AG04449 (cell line): ENCODE measurements at regions of chr10 and their contacts with region 1.

Region 1: GRCh38 chr10:32190890-32191491 is 134.8 kb upstream of the KIF5B start:
- DNase-seq: no peak
- H3K4me3 ChIP-seq: no peak overlapping the region
- CTCF ChIP-seq: peak; percentile 45

Region 2: DNA sequence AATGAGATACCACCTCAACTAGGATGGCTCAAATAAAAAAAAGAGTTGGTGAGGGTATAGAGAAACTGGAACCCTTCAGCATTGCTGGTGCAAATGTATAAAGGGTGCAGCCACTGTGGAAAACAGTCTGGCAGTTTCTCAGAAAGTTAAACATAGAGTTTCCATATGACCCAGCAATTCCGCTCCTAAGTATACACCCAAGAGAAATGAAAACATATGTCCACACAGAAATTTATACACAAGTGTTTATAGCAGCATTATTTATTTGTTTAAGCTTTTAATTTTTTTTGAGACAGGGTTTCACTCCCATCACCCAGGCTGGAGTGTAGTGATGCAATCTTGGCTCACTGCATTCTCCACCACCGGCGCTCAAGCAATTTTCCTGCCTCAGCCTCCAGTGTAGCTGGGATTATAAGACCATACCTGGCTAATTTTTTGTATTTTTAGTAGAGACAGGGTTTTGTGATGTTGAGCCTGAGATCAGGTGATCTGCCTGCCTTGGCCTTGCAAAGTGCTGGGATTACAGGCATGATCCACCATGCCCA is 16.6 kb before region 1 on chr10:
- CTCF ChIA-PET with region 1: interaction called, 20 read pairs
- POLR2A ChIA-PET with region 1: no interaction called
- DNase-seq: no peak
- H3K4me3 ChIP-seq: no peak overlapping the region
- CTCF ChIP-seq: no peak

Region 3: DNA sequence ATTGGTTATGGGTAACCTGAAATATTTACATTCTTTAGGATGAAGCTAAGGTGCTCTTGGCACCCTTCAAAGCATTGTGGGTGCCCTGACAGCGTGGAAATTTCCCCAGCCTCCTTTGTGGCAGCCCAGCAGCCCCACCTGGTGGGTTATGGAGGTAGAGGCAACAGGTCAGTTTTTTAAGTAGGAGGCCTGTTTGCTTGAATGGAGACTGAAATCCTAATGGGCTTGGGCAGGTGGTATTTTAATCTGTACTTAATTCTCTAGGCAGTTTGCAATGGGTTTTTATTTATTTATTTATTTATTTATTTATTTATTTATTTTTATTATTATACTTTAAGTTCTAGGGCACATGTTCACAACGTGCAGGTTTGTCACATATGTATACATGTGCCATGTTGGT is 16.6 kb after region 1 on chr10:
- CTCF ChIA-PET with region 1: interaction called, 39 read pairs
- POLR2A ChIA-PET with region 1: no interaction called
- DNase-seq: no peak
- H3K4me3 ChIP-seq: no peak overlapping the region
- CTCF ChIP-seq: peak; percentile 58

Region 4: DNA sequence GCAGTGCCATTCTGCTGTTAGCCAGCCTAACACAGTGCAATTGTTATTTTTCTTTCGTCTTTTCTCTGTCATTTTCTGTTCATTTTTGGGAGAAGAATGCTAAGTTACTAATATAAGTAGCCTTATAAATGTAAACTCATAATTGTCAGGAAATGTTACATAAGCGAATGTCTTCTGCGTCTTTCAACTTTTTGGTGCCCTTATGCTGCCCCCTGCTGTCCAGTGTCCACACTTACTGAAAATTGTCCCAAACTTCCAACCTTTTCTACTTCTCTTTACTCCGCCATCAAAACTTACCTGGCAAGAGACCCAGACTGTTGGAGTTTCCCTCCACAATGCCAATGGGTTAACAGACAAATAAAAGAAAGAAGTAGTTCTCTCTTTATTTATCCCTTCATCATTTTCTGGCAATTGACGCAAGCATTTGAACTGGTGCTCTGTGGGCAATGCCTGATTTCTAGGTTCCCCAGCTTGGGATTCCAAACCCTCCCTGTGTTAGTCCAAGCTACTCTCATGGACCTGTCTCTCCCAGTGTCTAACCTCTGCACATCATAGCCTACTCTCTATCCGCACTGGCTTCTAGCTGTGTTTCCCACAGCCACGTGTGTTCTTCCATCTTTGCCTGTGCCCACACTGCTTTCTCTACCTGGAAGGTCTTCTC is 176.9 kb after region 1 on chr10:
- CTCF ChIA-PET with region 1: interaction called, 15 read pairs
- POLR2A ChIA-PET with region 1: no interaction called
- DNase-seq: no peak
- H3K4me3 ChIP-seq: no peak overlapping the region
- CTCF ChIP-seq: peak; percentile 67

Region 5: DNA sequence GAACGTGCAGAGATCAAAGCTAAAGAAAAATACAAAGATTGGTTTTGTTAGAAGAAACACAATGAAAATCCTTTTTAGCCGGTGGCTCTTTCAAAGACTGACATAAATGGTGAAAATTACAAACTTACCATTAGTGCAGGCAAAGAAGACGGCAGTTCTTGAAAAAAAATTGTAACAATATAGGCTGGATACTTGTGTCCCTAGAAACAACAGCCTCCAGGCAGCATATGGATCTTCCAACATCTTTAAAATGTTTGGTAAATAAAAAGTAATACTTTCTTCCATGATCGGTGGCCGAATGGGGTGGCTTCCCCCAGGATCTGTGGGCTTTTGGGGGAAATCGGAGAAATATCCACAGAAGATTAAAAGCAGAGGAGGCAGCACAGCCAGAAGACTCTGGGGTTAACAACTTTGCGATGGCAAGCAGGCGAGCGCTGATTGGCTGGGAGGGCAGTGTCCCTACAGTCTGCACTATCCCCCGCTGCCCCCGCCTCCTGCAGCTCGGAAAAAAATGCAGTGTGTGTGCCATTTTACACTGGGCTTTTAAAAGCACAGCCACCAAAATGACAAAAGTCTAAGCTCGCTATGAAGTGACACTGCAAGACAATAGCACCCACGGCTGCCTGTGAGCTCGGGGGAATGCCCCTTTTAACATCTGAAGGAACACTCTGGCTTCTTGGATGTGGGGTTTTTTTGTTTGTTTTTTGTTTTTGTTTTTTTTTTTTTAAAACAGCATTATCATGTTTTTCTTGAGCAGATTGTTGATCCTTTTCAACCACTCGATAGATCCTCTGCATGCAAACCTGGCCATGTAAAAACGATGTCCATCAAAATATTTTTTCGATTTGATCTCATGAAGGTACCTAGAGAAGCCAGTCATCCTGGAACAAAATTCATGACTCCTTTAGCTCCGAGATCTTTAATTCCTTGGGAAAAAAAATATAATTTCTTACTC is 187.6 kb after region 1 on chr10:
- CTCF ChIA-PET with region 1: interaction called, 15 read pairs
- POLR2A ChIA-PET with region 1: no interaction called
- DNase-seq: peak; percentile 41
- H3K4me3 ChIP-seq: peak overlapping the region; percentile 73
- CTCF ChIP-seq: no peak

Region 6: DNA sequence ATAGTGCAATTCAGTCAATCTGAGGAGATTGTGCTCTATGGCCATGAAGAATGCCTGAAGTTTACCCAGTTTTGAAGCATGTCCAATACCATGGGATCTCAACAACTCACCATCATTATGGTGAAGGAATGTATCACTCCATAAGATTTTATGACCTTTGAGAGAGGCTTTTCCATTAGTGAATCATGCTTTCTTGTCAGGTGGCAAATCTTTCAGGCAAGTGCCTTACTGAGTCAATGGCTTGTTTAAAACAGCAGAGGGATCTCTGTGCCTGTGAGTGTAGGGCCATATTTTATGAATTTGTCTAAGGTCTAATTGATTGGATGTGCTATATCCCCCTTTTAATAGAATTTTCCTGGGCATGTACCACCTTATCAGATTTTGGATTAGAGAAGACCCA is 386.5 kb after region 1 on chr10:
- CTCF ChIA-PET with region 1: no interaction called
- POLR2A ChIA-PET with region 1: no interaction called
- DNase-seq: peak; percentile 4
- H3K4me3 ChIP-seq: no peak overlapping the region
- CTCF ChIP-seq: no peak